ENCODE measurements at regions of chr15 and their contacts with region 1.

Region 1: GRCh38 chr15:63763476-63764123 is 70.1 kb downstream of the HERC1 start:
- DNase-seq: peak in 2 of 9 experiments; percentile 37 to 61
- ATAC-seq: peak; percentile 73
- H3K4me3 ChIP-seq: no peak overlapping the region
- H3K4me3 Mint-ChIP-seq: no peak overlapping the region
- H3K27ac ChIP-seq: peak overlapping the region in 1 of 2 experiments; percentile 21
- H3K27ac Mint-ChIP-seq: no peak overlapping the region
- H3K4me1 ChIP-seq: peaks cover 28% of the 10 kb centered on the region
- H3K4me1 Mint-ChIP-seq: peaks cover 60% of the 10 kb centered on the region
- H3K27me3 ChIP-seq: no peaks in the 10 kb centered on the region
- H3K27me3 Mint-ChIP-seq: no peaks in the 10 kb centered on the region
- CTCF ChIP-seq: no peak

Region 2: DNA sequence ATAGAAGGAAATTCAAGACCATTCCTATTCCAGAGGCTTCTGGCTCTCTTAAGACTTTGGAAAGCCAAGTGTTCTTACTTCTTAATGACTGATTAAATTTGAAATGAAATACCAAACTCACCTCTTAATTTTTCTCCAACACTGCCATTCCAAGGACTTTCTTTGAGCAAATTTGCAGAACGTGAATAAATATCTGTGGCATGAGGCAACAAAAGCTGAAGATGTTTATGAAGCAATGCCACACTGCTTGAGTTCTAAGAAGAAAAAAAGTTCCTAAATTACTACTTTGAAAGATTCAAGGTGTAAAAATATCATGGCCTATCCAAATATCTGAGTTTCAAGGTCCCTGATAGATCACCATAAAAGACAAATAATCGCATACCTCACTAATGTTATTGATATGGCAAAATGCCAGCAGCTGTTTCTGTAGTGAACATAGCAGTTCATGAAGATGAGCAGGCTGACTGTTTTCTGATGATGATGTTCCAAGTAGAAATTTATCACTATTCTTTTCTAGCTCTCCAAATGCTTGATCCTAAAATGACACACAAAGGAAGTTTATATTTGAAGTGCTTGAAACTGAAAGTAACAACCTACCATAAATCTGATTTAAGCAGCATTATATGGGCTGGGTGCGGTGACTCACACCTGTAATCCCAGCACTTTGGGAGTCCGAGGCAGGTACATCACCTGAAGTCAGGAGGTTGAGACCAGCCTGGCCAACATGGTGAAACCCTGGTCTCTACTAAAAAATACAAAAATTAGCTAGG is 34.3 kb before region 1 on chr15:
- CTCF ChIA-PET with region 1: no interaction called
- POLR2A ChIA-PET with region 1: no interaction called
- intact Hi-C with region 1: no loop called
- DNase-seq: no peak
- ATAC-seq: no peak
- H3K4me3 ChIP-seq: no peak overlapping the region
- H3K4me3 Mint-ChIP-seq: no peak overlapping the region
- H3K27ac ChIP-seq: no peak overlapping the region
- H3K27ac Mint-ChIP-seq: peak overlapping the region; percentile 45
- H3K4me1 ChIP-seq: no peaks in the 10 kb centered on the region
- H3K4me1 Mint-ChIP-seq: peaks cover 17% of the 10 kb centered on the region
- H3K27me3 ChIP-seq: no peaks in the 10 kb centered on the region
- H3K27me3 Mint-ChIP-seq: no peaks in the 10 kb centered on the region
- CTCF ChIP-seq: no peak

Region 3: GRCh38 chr15:63752075-63752684 is 11.4 kb before region 1 on chr15:
- CTCF ChIA-PET with region 1: interaction called, 28 read pairs
- POLR2A ChIA-PET with region 1: no interaction called
- intact Hi-C with region 1: no loop called
- DNase-seq: peak in 7 of 9 experiments; percentile 18 to 75 (median 28)
- ATAC-seq: peak; percentile 86
- H3K4me3 ChIP-seq: no peak overlapping the region
- H3K4me3 Mint-ChIP-seq: no peak overlapping the region
- H3K27ac ChIP-seq: no peak overlapping the region
- H3K27ac Mint-ChIP-seq: peak overlapping the region; percentile 78
- H3K4me1 ChIP-seq: no peaks in the 10 kb centered on the region
- H3K4me1 Mint-ChIP-seq: peaks cover 6% of the 10 kb centered on the region
- H3K27me3 ChIP-seq: no peaks in the 10 kb centered on the region
- H3K27me3 Mint-ChIP-seq: no peaks in the 10 kb centered on the region
- CTCF ChIP-seq: peak; percentile 85

Region 4: GRCh38 chr15:63778800-63779199 is 15.2 kb after region 1 on chr15:
- CTCF ChIA-PET with region 1: no interaction called
- POLR2A ChIA-PET with region 1: interaction called, 5 read pairs
- intact Hi-C with region 1: loop called in 1 of 2 experiments (anchors 2 kb)
- DNase-seq: no peak
- ATAC-seq: no peak
- H3K4me3 ChIP-seq: no peak overlapping the region
- H3K4me3 Mint-ChIP-seq: no peak overlapping the region
- H3K27ac ChIP-seq: no peak overlapping the region
- H3K27ac Mint-ChIP-seq: no peak overlapping the region
- H3K4me1 ChIP-seq: peaks cover 3% of the 10 kb centered on the region
- H3K4me1 Mint-ChIP-seq: peaks cover 74% of the 10 kb centered on the region
- H3K27me3 ChIP-seq: no peaks in the 10 kb centered on the region
- H3K27me3 Mint-ChIP-seq: no peaks in the 10 kb centered on the region
- CTCF ChIP-seq: no peak

Region 5: DNA sequence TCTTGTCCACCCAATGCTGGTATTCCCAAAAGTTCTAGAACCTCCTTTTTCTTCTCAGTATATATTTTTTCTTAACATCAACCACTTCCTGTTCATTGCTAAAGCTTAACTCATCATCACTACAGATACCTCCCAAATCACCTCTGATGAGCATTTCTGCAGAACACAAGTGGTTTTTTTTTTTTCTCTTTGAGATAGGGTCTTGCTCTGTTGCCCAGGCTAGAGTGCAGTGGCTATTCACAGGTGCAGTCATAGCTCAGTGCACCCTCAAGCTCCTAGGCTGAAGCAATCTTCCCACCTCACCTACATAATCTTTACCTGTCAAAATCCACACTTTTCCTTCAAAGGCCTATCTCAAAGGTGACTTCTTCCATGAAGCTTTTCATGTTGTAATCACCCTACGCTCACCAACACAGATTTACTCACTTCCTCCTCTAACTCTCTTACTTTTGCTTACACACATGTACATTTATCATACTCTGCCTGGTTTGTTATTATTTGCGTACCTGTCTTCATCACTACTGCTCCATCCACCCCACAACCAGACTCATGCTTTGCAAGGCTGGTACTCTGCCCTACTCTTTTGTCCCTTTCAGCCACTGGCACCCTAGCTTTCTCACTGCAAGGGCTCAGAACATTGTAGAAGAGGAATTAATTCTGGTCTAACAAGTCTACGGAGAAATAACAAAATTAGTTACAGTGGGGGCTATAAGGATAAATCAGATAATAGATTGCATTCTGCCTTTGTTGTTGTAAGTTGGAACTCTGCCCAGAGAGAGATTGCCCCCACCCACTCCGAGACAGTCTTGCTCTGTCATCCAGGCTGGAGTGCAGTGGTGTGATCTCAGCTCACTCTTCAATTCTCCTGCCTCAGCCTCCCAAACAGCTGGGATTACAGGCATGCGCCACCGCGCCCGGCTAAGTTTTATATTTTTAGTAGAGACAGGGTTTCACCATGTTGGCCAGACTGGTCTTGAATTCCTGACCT is 42.7 kb after region 1 on chr15:
- CTCF ChIA-PET with region 1: no interaction called
- POLR2A ChIA-PET with region 1: no interaction called
- intact Hi-C with region 1: loop called in 1 of 2 experiments (anchors 5 kb)
- DNase-seq: peak in 1 of 9 experiments; percentile 21
- ATAC-seq: peak; percentile 46
- H3K4me3 ChIP-seq: no peak overlapping the region
- H3K4me3 Mint-ChIP-seq: peak overlapping the region; percentile 5
- H3K27ac ChIP-seq: no peak overlapping the region
- H3K27ac Mint-ChIP-seq: peak overlapping the region; percentile 30
- H3K4me1 ChIP-seq: peaks cover 75% of the 10 kb centered on the region
- H3K4me1 Mint-ChIP-seq: peaks cover 86% of the 10 kb centered on the region
- H3K27me3 ChIP-seq: no peaks in the 10 kb centered on the region
- H3K27me3 Mint-ChIP-seq: no peaks in the 10 kb centered on the region
- CTCF ChIP-seq: no peak

Region 6: DNA sequence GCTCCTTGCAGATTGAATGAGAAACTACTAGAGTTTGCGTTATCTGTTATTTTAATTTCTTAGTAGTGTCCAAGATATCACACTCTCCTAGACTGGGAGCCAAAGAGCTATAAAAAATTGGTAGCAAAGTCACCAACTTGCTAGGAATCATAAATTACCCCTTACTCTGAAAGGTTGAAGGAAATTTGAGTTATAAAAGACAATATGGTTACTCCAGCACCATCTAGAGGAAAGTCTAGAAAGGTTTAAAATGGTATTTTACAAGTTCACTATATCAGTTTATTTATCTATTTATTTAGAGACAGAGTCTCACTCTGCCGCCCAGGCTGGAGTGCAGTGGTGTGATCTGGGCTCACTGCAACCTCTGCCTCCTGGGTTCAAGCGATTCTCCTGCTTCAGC is 890.2 kb after region 1 on chr15:
- CTCF ChIA-PET with region 1: no interaction called
- POLR2A ChIA-PET with region 1: no interaction called
- intact Hi-C with region 1: no loop called
- DNase-seq: peak in 2 of 9 experiments; percentile 29 to 46
- ATAC-seq: no peak
- H3K4me3 ChIP-seq: no peak overlapping the region
- H3K4me3 Mint-ChIP-seq: no peak overlapping the region
- H3K27ac ChIP-seq: no peak overlapping the region
- H3K27ac Mint-ChIP-seq: peak overlapping the region; percentile 27
- H3K4me1 ChIP-seq: peaks cover 35% of the 10 kb centered on the region
- H3K4me1 Mint-ChIP-seq: peaks cover 41% of the 10 kb centered on the region
- H3K27me3 ChIP-seq: no peaks in the 10 kb centered on the region
- H3K27me3 Mint-ChIP-seq: no peaks in the 10 kb centered on the region
- CTCF ChIP-seq: peak; percentile 67

Measured in CD8-positive, alpha-beta T cell (primary cell).